Left cardiac atrium (tissue), 4 donors: ENCODE measurements at regions of chr5 and their contacts with region 1.

Region 1: DNA sequence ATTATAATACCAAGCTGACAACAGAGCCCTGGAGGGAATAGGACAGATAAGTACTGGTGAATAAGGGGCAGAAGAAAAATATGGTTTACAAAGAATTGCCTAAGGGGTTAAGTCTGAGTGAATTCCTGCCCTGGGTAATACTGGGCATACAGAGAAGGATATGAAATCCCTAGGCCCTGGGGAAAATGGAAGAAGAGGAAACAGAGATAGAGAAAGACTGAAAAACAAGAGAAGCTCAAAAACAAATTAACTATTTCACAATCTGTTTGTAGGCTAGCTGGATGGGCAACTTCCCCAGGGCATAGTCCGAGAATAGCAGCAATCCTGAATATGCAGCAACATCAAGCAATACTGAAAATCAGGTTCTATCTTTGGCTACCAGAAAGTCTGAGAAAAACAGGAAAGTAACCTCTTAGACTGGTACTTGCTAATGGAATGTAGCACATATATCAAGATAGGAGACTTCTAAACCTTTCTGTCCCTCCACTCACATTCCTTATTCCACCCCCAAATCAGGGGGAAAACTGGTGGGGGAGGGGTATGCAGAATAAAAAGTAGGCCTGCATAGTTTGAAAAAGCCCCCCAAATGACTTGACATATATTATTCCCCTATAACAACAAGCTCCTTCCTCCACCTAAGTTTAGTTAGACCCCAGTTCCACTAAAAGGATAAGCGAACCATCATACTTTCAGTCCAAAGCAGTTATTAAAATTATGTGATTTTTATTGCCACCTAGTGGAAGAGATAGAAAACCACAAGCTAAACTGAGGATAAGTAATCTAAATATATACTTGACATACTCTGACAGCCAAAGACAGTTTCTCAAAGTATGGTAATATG is 20.6 kb downstream of the SLC38A9 start:
- DNase-seq: no peak
- ATAC-seq: peak; percentile 67 to 71

Region 2: DNA sequence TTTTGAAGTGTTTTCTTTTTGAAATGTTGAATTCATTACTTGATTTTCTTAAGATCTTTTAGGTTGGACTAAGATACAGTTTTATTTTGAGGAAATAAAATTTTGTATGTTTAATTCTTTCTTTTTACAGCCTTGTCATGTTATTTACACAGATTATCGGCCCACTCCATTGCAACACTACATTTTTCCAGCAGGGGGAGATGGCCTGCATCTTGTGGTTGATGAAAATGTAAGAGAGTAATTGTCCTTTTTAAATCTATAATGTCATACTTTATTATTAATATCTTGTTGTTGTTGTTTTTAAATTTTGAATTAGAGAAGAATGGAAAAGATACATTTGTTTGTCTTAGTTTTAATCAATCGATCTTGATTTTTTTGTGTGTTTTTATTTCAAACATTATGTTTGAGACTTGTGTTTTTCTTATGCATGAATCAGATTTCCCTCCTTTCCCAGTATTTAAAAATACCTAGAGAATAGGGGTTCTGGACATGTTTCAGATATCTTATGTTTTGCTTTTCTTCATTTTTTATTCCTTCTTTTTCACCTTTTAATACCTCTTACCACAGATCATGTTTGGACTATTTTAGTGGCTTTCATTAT is 347.0 kb before region 1 on chr5:
- intact Hi-C with region 1: loop called (anchors 5 to 10 kb)
- DNase-seq: peak; percentile 45
- ATAC-seq: no peak

Region 3: DNA sequence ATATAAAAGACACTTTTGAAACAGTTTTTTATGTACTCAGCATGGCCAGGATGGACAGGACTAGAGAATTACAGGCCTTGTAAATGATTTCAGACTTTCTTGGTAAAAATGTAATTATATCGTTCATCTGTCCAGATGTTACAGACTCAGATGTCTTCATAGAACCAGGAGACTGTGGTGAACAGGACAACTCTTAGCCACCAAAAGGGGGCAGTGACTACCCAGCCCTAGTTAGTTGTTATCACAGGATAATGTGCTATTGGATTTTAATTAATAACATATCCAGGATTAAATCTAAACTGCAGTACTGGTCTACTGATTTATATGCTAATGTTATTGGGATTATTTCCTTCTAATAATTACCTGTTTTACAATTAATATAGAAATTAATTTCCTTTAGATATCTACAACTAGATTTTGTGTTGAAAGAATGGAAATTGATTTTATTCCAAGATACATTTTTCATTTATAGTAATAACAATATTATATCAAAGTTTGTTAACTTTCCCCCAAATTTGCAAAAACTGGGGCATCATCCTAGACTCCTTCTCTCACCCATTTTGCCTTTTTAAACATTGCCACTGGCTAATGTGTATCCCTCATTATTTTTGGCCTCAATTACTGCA is 284.3 kb before region 1 on chr5:
- intact Hi-C with region 1: loop called (anchors 1 to 5 kb)
- DNase-seq: no peak
- ATAC-seq: peak; percentile 71 to 78

Region 4: DNA sequence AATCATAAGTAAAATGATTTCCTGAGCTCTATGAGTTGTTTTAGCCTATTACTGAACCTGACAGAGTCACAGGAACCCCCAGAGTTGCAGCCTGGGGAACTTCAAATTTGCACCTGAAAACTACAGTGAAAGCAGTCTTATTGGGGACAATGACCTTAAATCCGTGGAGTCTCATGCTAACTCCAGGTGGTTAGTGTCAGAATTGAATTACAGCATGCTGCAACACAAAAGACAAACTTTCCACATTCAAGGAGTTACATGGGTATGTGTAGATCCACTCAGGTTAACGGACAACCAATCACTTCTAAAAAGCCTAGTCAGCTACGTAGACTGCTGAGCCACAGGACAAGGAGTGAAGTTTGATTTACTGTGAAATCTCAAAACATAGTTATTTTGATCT is 206.4 kb before region 1 on chr5:
- intact Hi-C with region 1: no loop called
- DNase-seq: no peak
- ATAC-seq: no peak

Region 5: DNA sequence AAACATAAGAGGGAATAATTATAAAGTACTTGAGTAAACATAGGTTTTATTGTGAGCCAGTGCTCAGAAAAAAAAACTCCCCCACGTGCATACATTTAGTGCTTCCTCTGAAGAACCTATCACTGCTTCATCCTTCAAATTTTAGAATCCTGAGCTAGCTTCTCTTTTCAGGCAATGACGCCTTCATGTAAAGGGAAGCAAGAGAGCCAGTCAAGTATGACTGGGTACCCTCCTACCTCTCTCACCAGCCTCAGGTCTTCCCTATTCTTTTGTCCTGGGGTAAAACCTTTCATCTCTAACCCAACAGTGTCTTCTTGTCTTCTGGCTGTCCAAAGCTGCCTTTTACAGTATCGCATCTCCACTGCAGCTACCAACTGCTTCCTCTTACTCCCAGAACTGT is 188.7 kb before region 1 on chr5:
- intact Hi-C with region 1: no loop called
- DNase-seq: no peak
- ATAC-seq: no peak